Activated CD4-positive, alpha-beta T cell treated with anti-CD3 and anti-CD28 coated beads for 36 hours (primary cell): ENCODE measurements at regions of chr3 and their contacts with region 1.

Region 1: GRCh38 chr3:58332575-58333188 is at the start of gene PXK:
- DNase-seq: peak; percentile 89
- ATAC-seq: peak; percentile 84
- H3K4me3 Mint-ChIP-seq: peak within 1 kb of the TSS; percentile 100
- H3K27ac Mint-ChIP-seq: peak within 1 kb of the TSS; percentile 96
- H3K4me1 Mint-ChIP-seq: peaks cover 30% of the 10 kb centered on the region
- H3K27me3 Mint-ChIP-seq: no peaks in the 10 kb centered on the region
- total RNA-seq, gene PXK: 35.2 to 50.7 TPM

Region 2: GRCh38 chr3:58349792-58350626 is 17.3 kb after region 1 on chr3:
- CTCF ChIA-PET with region 1: interaction called, 36 read pairs
- POLR2A ChIA-PET with region 1: interaction called, 4 read pairs
- intact Hi-C with region 1: loop called (anchors 1 to 2 kb)
- DNase-seq: no peak
- ATAC-seq: peak; percentile 23
- H3K4me3 Mint-ChIP-seq: no peak overlapping the region
- H3K27ac Mint-ChIP-seq: peak overlapping the region; percentile 19
- H3K4me1 Mint-ChIP-seq: peaks cover 67% of the 10 kb centered on the region
- H3K27me3 Mint-ChIP-seq: no peaks in the 10 kb centered on the region

Region 3: DNA sequence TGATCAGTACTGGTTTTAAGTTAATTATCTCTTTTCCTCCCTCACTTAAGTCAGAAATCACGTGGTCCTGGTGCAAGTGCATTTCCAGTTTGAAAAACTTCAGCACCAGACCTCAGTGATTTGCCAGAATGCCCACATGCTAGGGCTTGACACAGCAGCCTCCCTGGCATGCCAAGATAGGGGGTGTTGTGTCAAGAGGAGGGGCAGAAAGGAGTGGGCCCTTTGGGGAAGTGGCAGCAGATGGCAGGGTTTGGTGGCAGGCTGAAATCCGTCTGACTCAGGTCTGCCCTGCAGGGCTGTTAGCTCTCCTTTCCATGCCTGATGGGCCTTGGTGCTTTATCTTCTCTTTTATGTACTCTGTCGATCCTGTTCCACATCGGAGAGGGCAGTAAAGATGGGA is 23.4 kb after region 1 on chr3:
- CTCF ChIA-PET with region 1: interaction called, 36 read pairs
- POLR2A ChIA-PET with region 1: interaction called, 3 read pairs
- intact Hi-C with region 1: loop called (anchors 2 kb)
- DNase-seq: no peak
- ATAC-seq: no peak
- H3K4me3 Mint-ChIP-seq: no peak overlapping the region
- H3K27ac Mint-ChIP-seq: no peak overlapping the region
- H3K4me1 Mint-ChIP-seq: peaks cover 46% of the 10 kb centered on the region
- H3K27me3 Mint-ChIP-seq: no peaks in the 10 kb centered on the region